ENCODE measurements at regions of chr6 and their contacts with region 1.

Region 1: GRCh38 chr6:143806282-143807102 is 36.6 kb upstream of the LTV1 start:
- DNase-seq: peak; percentile 97
- ATAC-seq: peak; percentile 75
- H3K4me3 Mint-ChIP-seq: peak overlapping the region; percentile 55
- H3K27ac Mint-ChIP-seq: peak overlapping the region; percentile 89
- H3K4me1 Mint-ChIP-seq: peaks cover 46% of the 10 kb centered on the region
- H3K27me3 Mint-ChIP-seq: no peaks in the 10 kb centered on the region
- CTCF ChIP-seq: no peak

Region 2: DNA sequence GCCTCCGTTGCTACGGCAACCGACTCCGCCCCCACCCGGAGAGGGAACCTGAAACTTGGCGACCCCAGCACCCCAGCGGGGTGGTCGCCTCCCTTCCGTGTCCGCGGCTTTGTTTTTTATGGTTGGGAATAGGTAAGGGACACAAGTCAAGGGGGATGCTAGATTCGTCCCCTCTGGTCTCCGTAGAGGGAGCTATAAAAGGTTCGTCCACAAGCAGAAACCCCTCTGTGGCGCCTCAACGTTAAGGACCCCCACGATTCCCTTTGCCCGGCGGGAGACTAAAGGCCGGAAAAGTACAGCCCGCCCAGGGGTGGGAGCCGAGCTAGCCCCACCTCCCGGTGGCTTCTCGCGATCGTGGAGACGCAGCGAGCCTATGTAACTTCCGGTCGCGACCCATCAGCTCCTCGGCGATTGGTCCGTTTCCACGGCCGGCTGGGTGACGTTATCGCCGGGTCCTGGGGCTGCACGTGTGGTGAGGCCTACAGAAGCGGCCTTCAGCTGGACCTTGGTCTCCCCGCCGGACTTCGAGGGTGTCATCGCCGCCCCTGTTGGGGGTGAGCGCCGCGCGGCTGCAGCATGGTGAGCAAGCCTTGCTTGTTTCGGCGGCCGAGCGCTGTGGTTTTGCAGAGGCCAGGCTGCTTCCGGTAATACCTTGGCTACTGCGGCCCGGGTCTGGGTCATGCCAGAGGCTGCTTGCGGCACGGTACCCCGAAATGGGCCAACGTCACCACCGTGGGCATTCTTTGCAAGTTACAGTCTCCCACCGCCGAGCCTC is 36.6 kb after region 1 on chr6 and contains the start of gene LTV1:
- CTCF ChIA-PET with region 1: no interaction called
- POLR2A ChIA-PET with region 1: interaction called, 13 read pairs
- intact Hi-C with region 1: no loop called
- DNase-seq: peak; percentile 97
- ATAC-seq: peak; percentile 97
- H3K4me3 Mint-ChIP-seq: peak within 1 kb of the TSS; percentile 98
- H3K27ac Mint-ChIP-seq: peak within 1 kb of the TSS; percentile 99
- H3K4me1 Mint-ChIP-seq: peaks cover 21% of the 10 kb centered on the region
- H3K27me3 Mint-ChIP-seq: no peaks in the 10 kb centered on the region
- CTCF ChIP-seq: no peak
- total RNA-seq, gene LTV1: 30.9 to 31.6 TPM

Measured in activated CD8-positive, alpha-beta T cell treated with anti-CD3 and anti-CD28 coated beads for 36 hours (primary cell).